ENCODE measurements at regions of chr1 and their contacts with region 1.

Region 1: GRCh38 chr1:19582302-19582701 is 61.8 kb upstream of the NBL1 start:
- DNase-seq: peak; percentile 85
- ATAC-seq: peak; percentile 95
- H3K4me3 Mint-ChIP-seq: no peak overlapping the region
- H3K27ac Mint-ChIP-seq: no peak overlapping the region
- H3K4me1 Mint-ChIP-seq: peaks cover 8% of the 10 kb centered on the region
- H3K27me3 Mint-ChIP-seq: peaks cover 6% of the 10 kb centered on the region

Region 2: GRCh38 chr1:19341201-19342072 is 240.9 kb before region 1 on chr1:
- CTCF ChIA-PET with region 1: interaction called, 10 read pairs
- DNase-seq: peak; percentile 79
- ATAC-seq: peak; percentile 57
- H3K4me3 Mint-ChIP-seq: no peak overlapping the region
- H3K27ac Mint-ChIP-seq: peak overlapping the region; percentile 43
- H3K4me1 Mint-ChIP-seq: peaks cover 19% of the 10 kb centered on the region
- H3K27me3 Mint-ChIP-seq: no peaks in the 10 kb centered on the region

Region 3: GRCh38 chr1:19390901-19391595 is 191.3 kb before region 1 on chr1:
- CTCF ChIA-PET with region 1: interaction called, 32 read pairs
- DNase-seq: peak; percentile 76
- ATAC-seq: peak; percentile 79
- H3K4me3 Mint-ChIP-seq: peak overlapping the region; percentile 71
- H3K27ac Mint-ChIP-seq: peak overlapping the region; percentile 98
- H3K4me1 Mint-ChIP-seq: peaks cover 59% of the 10 kb centered on the region
- H3K27me3 Mint-ChIP-seq: no peaks in the 10 kb centered on the region

Region 4: DNA sequence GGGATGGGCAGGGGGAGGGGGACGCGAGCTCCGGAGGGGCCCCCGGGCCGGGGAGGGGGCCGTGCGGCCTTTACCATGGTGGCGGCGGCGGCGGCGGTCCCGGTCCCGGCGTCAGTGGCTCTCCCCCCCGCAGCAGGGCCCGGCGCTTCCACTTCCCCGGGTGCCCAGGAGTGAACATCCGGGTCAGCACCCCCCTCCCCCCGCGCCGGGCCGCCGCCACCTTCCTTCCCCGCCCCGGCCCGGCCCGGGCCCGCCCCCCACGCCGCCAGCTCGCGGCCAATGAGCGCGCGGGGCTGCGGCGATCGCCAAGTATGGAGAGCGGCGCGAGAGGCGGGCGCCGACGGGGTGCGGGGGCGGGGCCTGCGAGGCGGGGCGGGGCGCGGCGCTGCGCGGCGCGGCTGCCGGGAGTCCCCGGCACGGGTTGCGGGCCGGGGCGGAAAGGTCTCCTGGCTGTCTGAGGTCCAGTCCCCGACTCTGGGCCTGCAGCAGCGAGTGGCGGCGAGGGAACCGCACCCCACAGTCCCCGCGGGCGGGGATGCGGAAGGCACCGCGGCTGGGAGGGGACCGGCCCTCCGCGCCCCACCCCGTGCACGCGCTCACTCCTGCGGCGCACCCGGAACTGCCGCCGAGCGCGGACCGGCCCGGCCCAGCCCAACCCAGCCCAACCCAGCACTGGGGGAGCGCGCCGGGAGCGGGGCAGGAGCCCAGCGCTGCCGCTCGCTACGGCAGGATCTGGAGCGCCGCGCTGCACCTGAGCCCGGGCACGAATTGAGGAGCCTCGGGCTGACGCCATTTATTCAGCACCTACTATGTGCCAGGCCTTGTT is 96.7 kb before region 1 on chr1 and contains the start of gene CAPZB:
- CTCF ChIA-PET with region 1: interaction called, 29 read pairs
- DNase-seq: peak; percentile 95
- ATAC-seq: peak; percentile 91
- H3K4me3 Mint-ChIP-seq: peak within 1 kb of the TSS; percentile 96
- H3K27ac Mint-ChIP-seq: peak within 1 kb of the TSS; percentile 95
- H3K4me1 Mint-ChIP-seq: peaks cover 52% of the 10 kb centered on the region
- H3K27me3 Mint-ChIP-seq: no peaks in the 10 kb centered on the region
- total RNA-seq, gene CAPZB: 411 to 427 TPM

Region 5: DNA sequence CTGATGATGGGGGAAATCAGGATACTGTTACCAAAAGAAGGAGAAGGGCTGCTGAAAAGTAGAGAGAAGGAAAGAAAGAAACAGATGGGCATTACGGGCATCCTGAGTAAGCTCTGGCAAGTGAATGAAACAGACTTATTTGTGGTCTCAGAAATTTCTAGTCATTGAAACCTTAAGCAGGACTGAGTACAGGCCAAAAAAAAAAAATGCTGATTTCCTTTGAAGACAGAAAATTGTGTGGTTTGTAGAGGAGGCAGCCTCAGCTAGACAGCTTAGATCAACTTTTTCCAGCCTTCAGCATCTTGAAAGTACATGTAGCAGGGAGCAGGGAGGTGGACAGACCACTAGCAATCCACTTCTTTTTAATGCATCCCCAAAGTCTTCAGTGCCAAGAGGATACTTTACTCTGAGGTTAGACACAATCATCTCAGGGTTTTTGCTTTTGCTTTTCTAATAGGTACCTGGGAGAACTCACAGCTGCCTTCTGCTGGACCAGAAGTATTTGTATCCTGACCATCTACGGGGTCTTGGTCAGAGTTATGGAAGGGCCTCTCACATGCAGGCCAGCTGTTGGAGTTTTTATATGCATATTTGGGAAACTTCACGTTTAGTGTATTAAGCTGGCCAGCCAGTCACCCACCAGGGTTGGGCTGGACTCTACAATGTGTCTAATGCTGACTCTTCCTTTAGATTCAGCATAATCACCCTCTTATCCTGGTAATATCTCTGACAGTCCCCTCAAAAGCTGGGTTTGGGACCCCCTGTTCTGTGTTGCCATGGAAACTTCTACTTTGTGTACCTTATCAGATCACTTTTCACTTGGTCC is 86.3 kb before region 1 on chr1:
- CTCF ChIA-PET with region 1: interaction called, 10 read pairs
- DNase-seq: no peak
- ATAC-seq: no peak
- H3K4me3 Mint-ChIP-seq: no peak overlapping the region
- H3K27ac Mint-ChIP-seq: no peak overlapping the region
- H3K4me1 Mint-ChIP-seq: peaks cover 27% of the 10 kb centered on the region
- H3K27me3 Mint-ChIP-seq: no peaks in the 10 kb centered on the region

Region 6: GRCh38 chr1:19563324-19564097 is 18.8 kb before region 1 on chr1:
- CTCF ChIA-PET with region 1: no interaction called
- DNase-seq: no peak
- ATAC-seq: no peak
- H3K4me3 Mint-ChIP-seq: no peak overlapping the region
- H3K27ac Mint-ChIP-seq: no peak overlapping the region
- H3K4me1 Mint-ChIP-seq: no peaks in the 10 kb centered on the region
- H3K27me3 Mint-ChIP-seq: no peaks in the 10 kb centered on the region

Region 7: DNA sequence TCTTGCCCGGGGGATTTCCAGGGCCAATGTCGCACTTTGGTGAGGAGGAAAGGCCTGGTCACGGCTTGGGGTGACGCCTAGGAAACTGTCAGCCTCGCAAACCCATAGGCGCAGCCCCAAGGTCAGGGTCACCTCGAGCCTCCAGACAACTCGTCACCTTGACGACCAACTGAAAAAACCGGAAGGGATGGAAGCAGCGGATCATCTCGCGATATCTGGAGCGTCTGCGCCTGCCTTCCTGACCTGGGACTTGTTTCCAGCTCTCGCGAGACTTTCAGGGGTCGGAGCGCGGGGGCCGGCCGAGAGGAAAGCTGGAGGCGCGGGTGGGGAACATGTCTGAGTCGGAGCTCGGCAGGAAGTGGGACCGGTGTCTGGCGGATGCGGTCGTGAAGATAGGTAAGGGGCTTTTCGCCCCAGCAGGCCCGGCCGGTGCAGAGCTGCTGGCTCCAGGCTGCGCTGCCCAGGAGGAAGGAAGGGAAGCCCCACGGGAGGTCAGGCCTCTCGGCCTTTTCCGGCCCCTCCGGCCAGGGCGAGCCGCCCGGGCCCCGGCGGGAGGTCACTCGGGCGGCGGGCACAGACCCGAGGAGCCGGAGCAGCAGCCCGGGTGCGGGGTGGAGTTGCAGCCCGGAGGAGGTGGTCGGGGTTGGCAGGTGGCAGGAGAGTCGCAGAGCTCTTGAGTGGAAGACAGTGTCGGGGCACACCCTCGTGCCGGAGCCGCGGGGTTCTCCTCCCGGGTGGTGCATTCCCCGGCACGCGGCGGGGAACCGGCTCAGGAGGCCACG is 14.6 kb after region 1 on chr1:
- CTCF ChIA-PET with region 1: interaction called, 15 read pairs
- DNase-seq: peak; percentile 99
- ATAC-seq: peak; percentile 85
- H3K4me3 Mint-ChIP-seq: peak overlapping the region; percentile 94
- H3K27ac Mint-ChIP-seq: peak overlapping the region; percentile 97
- H3K4me1 Mint-ChIP-seq: peaks cover 48% of the 10 kb centered on the region
- H3K27me3 Mint-ChIP-seq: peaks cover 2% of the 10 kb centered on the region

Region 8: DNA sequence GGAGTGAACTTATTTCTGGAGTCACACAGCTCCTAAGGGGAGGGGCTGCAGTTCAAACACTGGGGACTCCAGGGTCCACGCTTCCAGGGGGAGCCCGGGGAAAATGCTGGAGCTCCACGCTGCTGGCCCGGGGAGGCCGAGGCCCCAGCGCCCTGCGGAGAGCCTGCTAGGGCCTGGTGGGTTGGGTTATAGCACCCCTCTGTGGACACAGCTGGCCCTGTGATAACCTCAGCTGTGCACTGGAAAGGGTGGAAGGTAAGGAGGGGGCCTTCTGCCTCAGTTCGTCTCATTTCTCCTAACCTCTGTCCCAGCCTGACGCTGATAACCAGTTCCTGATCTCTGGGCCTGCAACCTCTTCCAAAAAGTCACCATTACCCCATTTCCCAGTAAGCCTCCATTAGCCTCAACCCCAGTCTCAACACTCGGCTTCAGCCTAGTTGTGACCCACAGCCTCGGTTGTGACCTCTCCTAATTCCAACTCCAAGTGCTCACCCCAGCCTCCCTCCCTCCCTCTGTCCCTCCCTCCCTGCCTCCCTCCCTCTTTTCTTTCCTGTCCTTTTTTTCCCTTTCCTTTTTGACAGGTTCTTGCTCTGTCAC is 68.9 kb after region 1 on chr1:
- CTCF ChIA-PET with region 1: interaction called, 15 read pairs
- DNase-seq: peak; percentile 66
- ATAC-seq: peak; percentile 67
- H3K4me3 Mint-ChIP-seq: no peak overlapping the region
- H3K27ac Mint-ChIP-seq: no peak overlapping the region
- H3K4me1 Mint-ChIP-seq: peaks cover 25% of the 10 kb centered on the region
- H3K27me3 Mint-ChIP-seq: no peaks in the 10 kb centered on the region

Measured in activated CD8-positive, alpha-beta memory T cell treated with anti-CD3 and anti-CD28 coated beads, Interleukin-2, amount 10 ng/mL, durations not matched to agents 7 days and 5 days (primary cell).